ENCODE measurements at regions of chr7 and their contacts with region 1.

Region 1: GRCh38 chr7:155344600-155345433 is 47.1 kb downstream of the INSIG1 start:
- DNase-seq: peak; percentile 57 to 92 (median 83)

Region 2: DNA sequence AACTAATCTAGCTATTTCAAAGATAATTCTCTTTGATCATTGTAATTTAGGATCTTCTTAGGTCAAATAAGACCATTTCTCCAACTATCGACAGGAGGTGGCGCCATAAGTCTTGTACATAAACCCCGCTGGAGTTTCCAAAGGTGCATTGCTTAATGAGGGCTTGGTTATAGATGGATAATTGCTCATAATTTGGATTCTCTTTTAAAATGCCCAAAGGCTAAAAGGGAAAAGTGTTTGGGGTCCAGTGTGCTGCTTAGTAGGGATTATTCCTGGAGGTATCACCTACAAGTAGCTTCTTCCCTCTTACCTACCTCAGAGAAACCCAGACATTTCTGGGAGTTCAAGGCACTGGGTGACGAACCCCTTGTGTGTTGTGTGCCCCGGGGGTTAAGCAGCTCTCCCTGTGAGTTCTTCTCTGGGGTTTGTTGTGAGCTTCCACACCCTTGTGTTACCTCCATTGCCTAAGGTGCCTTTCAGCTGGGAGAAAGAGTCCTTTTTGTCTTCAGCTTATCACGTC is 417.1 kb before region 1 on chr7:
- intact Hi-C with region 1: loop called (anchors 10 kb)
- DNase-seq: peak; percentile 37 to 94 (median 84)

Region 3: DNA sequence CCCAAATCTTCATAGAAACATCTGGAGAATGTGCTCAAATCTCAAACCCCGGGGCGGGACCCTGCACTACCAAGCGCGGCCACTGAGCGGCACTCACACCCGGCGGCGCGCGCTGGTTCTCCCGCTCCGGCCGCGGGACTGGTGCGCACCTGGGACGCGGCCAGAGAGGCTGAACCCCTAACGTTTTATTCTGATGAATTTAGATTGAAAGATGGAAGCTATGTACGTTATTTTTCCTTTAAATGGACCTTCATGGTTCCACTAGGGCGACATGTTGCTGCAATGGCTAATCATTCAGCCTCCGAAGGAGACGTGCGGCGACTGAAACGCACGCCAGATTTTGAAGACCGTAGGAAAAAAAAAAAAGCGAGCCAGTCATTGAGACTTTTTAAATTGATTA is 154.1 kb before region 1 on chr7:
- intact Hi-C with region 1: loop called (anchors 5 kb)
- DNase-seq: peak in 38 of 42 donors; percentile 23 to 87 (median 66)

Region 4: DNA sequence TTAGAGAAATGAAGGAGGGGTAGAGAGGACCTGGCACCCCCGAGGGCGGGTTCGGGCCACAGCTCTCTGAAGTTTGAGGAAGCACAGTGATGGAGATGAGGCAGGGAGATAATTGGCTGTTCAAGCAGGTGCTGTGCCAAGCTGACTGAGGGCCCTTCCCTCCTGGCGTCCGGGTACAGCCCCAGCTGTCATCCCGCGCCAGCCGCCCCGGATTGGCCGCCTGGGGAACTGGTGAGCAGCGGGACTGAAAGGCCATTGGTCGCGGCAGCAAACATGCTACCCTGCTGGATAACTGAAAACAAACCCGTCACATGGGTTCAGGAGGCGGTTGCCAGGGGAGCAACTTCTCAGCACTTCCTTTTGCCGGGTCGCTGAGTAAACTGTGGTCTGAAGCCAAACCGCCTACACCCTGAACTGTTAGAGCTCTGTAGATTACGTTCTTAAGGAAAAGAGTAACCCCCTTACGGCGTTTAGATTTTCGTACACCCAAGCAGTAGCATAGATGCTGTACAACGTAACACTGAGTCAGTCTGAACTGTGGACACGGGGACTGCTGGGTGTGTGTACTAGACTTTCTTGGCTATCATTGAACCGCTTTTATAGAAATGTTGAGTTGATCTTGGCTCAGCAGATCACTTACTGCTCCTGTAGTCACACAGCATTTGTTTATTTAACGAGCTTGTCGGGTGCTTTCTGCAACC is 45.8 kb before region 1 on chr7:
- intact Hi-C with region 1: loop called (anchors 10 kb)
- DNase-seq: peak; percentile 97 to 100 (median 99)